Heart right ventricle (tissue), 16 donors: ENCODE measurements at regions of chr2 and their contacts with region 1.

Region 1: GRCh38 chr2:197378494-197379307 is 56.1 kb downstream of the SF3B1 start:
- DNase-seq: peak in 1 of 2 donors; percentile 43
- ATAC-seq: peak in 7 of 8 donors; percentile 52 to 77 (median 69)
- H3K4me3 ChIP-seq: no peak overlapping the region
- H3K27ac ChIP-seq: no peak overlapping the region
- H3K4me1 ChIP-seq: peaks cover 0 to 6% (median 0%) of the 10 kb centered on the region in 9 donors
- H3K27me3 ChIP-seq: no peaks in the 10 kb centered on the region
- CTCF ChIP-seq: peak; percentile 51 to 90 (median 76)

Region 2: DNA sequence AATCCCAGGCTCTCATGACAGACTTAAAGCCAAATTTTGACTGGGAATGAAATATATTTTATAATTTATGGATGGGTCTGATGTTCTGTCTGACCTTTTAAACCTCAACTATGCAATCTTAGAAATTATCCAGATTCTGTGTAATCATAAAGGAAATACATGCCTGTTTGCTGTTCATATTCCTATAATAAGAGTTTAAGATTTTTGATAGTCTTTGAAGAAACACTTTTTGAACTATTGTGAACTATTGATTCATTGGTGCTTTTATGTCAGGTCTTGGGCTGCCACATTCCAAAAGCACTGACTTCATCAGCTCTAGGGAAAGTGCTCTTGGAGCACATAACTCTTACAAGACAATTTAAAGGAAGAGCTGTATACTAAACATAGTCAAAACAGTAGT is 675.0 kb before region 1 on chr2:
- intact Hi-C with region 1: no loop called
- DNase-seq: no peak
- ATAC-seq: no peak
- H3K4me3 ChIP-seq: no peak overlapping the region
- H3K27ac ChIP-seq: no peak overlapping the region
- H3K4me1 ChIP-seq: no peaks in the 10 kb centered on the region
- H3K27me3 ChIP-seq: no peaks in the 10 kb centered on the region
- CTCF ChIP-seq: no peak

Region 3: DNA sequence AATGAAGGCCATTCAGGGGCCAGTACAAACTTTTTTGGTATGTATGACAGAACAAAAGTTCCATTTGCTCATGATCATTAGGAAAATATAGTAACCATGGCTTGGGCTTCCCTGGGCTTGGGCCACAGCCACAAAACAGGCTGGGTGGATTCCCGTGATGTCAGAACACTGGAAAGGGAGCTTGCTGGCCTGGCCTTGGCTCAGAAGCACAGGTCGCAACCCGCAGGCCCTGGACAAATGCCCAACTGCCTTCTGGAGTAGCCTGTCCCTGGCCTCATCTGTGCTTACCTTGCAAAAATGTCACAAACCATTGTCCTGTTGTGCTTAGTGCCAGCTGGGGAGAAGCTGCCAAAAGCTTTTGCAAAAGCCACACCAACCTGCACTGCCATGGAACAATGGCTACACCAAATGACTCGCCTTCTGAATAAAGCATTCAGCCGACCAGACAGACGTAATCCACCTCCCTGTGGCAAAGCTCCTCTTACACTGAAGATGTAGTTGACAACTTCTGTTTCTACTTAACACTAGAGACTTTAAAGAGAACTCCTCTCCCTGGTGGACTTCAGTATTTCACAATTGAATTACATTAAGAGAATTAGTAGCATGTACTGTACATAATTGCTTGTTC is 193.6 kb before region 1 on chr2:
- intact Hi-C with region 1: loop called in 9 of 10 experiments (anchors 2 to 5 kb)
- DNase-seq: peak; percentile 87 to 89
- ATAC-seq: peak; percentile 81 to 99 (median 93)
- H3K4me3 ChIP-seq: no peak overlapping the region
- H3K27ac ChIP-seq: peak overlapping the region in 8 of 10 donors; percentile 3 to 70 (median 51)
- H3K4me1 ChIP-seq: peaks cover 0 to 27% (median 18%) of the 10 kb centered on the region in 9 donors
- H3K27me3 ChIP-seq: no peaks in the 10 kb centered on the region
- CTCF ChIP-seq: no peak

Region 4: DNA sequence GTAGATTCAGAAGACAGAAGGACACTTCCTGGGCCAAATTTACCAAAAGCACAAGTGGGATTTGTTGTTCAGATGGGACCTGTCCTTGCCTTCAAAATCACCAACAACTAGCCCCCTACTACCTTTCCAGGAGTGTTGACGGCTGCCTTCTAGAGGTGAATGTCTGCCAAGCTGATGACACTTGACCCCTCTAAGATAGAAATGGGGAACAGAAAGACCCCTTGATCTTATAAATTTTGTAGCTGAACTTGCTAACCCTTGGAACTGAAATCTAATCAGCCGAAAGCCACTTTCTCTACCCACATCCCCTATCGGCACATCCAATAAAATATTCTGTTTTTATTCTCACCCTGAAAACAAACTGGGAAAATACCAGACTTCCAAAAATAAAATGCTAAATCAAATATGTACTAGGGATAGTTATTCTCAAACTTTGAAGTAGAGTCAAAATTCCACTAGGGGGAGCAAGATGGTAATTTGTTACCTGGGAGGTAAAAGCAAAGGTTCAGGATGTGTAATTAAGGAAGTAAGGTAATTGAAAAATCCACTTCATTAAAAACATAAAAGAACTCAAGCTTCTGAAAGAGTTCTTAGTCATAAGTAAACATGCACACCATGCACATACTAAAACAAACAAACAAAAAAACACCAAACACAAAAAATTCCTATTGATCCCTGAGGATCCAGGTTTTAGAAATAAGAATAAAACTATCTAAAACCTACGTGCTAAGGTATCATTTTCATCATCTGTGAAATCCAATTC is 187.3 kb before region 1 on chr2:
- intact Hi-C with region 1: loop called in 9 of 10 experiments (anchors 2 to 5 kb)
- DNase-seq: no peak
- ATAC-seq: peak in 1 of 8 donors; percentile 50
- H3K4me3 ChIP-seq: no peak overlapping the region
- H3K27ac ChIP-seq: no peak overlapping the region
- H3K4me1 ChIP-seq: peaks cover 0 to 35% (median 14%) of the 10 kb centered on the region in 9 donors
- H3K27me3 ChIP-seq: no peaks in the 10 kb centered on the region
- CTCF ChIP-seq: peak; percentile 45 to 79 (median 74)

Region 5: GRCh38 chr2:197324801-197325200 is 53.9 kb before region 1 on chr2:
- intact Hi-C with region 1: no loop called
- DNase-seq: no peak
- ATAC-seq: no peak
- H3K4me3 ChIP-seq: no peak overlapping the region
- H3K27ac ChIP-seq: no peak overlapping the region
- H3K4me1 ChIP-seq: peaks cover 0 to 12% (median 0%) of the 10 kb centered on the region in 9 donors
- H3K27me3 ChIP-seq: peaks cover 0 to 5% (median 0%) of the 10 kb centered on the region in 7 donors
- CTCF ChIP-seq: no peak